ENCODE measurements at regions of chr1 and their contacts with region 1.

Region 1: GRCh38 chr1:247165674-247166073 is 6.1 kb downstream of the ZNF124 start:
- DNase-seq: no peak
- H3K4me3 ChIP-seq: no peak overlapping the region
- H3K27ac ChIP-seq: no peak overlapping the region
- H3K4me1 ChIP-seq: no peaks in the 10 kb centered on the region
- H3K27me3 ChIP-seq: no peaks in the 10 kb centered on the region
- CTCF ChIP-seq: no peak

Region 2: DNA sequence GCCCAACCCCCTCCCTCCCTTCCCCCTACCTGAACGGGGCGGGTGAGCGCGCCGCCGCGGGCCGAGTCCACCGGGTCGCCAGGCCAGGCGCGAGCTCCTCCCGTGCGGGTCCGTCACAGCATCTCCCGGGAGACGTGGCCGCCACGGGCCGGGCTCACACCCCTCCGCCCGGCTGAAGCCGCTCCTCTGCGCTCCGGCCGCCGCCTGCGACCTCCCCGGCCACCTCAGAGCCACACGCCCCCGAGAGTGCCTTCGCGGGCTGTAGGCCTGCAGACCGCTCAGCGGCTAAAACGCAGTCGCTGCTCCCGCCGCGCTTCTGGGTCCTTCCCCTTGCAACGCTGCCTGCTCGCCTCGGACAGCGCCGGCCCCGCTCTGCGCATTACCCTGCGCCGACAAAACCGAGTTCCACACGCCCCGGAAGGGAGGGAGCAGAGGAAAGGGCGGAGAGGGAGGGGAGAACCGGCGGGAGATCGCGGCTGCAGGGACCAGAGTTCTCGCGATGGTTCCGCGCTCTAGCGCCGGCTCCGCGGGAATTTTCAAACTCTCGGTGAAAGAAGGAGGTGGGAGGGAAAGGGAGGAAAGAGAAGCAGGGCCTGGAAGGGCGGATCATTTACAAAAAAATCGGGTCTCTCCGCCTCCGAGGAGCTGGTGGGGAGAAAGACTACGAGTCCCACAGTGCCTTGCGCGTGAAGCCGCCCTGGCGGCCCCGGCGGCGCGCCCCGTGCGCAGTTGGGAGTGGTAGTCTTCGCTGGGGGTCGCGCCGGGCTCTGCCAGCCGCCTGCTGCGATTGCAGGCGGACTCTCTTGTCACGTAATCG is 233.9 kb before region 1 on chr1 and contains the start of gene AHCTF1:
- intact Hi-C with region 1: no loop called
- DNase-seq: peak; percentile 87 to 98
- H3K4me3 ChIP-seq: peak within 1 kb of the TSS; percentile 95 to 98
- H3K27ac ChIP-seq: peak within 1 kb of the TSS; percentile 96 to 98
- H3K4me1 ChIP-seq: peaks cover 4 to 19% of the 10 kb centered on the region in 2 donors
- H3K27me3 ChIP-seq: no peaks in the 10 kb centered on the region
- CTCF ChIP-seq: peak in 1 of 3 experiments; percentile 7
- total RNA-seq, gene AHCTF1: 16.5 TPM

Region 3: DNA sequence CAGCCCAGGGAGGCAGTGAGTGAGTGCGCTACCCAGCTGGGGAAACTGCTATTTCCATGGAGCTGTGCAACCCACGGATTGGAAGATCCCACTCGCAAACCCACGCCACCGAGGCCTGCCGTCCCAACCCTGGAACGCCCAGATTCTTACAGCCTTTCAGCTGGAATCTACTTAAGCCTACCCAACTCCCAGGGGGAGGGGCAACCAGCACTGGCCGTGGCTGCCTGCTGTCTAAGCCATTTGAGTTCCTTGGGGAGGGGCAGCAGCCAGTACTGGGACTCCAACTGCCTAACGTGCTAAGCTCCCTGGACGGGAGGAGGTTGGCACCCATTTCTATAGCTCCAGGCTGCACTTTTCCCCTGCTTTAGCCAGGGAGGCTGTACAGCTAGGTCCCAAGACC is 34.4 kb before region 1 on chr1:
- intact Hi-C with region 1: loop called (anchors 5 kb)
- DNase-seq: no peak
- H3K4me3 ChIP-seq: no peak overlapping the region
- H3K27ac ChIP-seq: no peak overlapping the region
- H3K4me1 ChIP-seq: no peaks in the 10 kb centered on the region
- H3K27me3 ChIP-seq: no peaks in the 10 kb centered on the region
- CTCF ChIP-seq: no peak

Measured in ascending aorta (tissue), 2 donors.